Dorsolateral prefrontal cortex (tissue), 120 donors: ENCODE measurements at regions of chr2 and their contacts with region 1.

Region 1: GRCh38 chr2:61764035-61764800 is 89.6 kb downstream of the FAM161A start:
- DNase-seq: peak; percentile 96 to 99 (median 98)
- H3K4me3 ChIP-seq: peak overlapping the region; percentile 55 to 95 (median 77)
- H3K27ac ChIP-seq: peak overlapping the region; percentile 90 to 100 (median 98)
- H3K27me3 ChIP-seq: no peaks in the 10 kb centered on the region
- CTCF ChIP-seq: peak in 18 of 56 donors; percentile 2 to 38 (median 22)

Region 2: GRCh38 chr2:61144697-61145268 is 619.4 kb before region 1 on chr2:
- intact Hi-C with region 1: loop called in 1 of 2 experiments (anchors 10 kb)
- DNase-seq: peak; percentile 79 to 93 (median 88)
- H3K4me3 ChIP-seq: peak overlapping the region; percentile 51 to 96 (median 69)
- H3K27ac ChIP-seq: peak overlapping the region in 58 of 59 donors; percentile 31 to 96 (median 87)
- H3K27me3 ChIP-seq: no peaks in the 10 kb centered on the region
- CTCF ChIP-seq: peak in 29 of 56 donors; percentile 3 to 50 (median 26)

Region 3: DNA sequence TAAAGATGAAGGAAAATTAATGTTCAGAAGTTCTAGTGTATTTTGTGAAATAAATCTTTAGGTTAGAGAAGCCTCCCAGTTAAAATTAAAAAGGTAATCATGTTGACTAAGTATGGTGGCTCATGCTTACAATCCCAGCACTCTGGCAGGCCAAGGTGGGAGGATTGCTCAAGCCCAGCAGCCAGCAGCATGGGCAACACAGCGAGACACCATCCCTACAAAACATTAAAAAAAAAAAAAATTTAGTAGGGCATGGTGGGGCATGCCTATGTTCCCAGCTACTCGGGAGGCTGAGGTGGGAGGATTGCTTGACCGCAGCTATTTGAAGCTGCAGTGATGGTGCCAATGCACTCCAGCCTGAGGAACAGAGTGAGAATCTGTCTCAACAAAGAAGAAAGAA is 244.0 kb before region 1 on chr2:
- intact Hi-C with region 1: no loop called
- DNase-seq: no peak
- H3K4me3 ChIP-seq: no peak overlapping the region
- H3K27ac ChIP-seq: peak overlapping the region in 3 of 59 donors; percentile 0 to 28 (median 16)
- H3K27me3 ChIP-seq: no peaks in the 10 kb centered on the region
- CTCF ChIP-seq: no peak

Region 4: GRCh38 chr2:61670591-61671501 is 93.4 kb before region 1 on chr2:
- intact Hi-C with region 1: loop called in 1 of 2 experiments (anchors 5 kb)
- DNase-seq: peak in 8 of 10 donors; percentile 16 to 78 (median 52)
- H3K4me3 ChIP-seq: peak overlapping the region in 58 of 59 donors; percentile 5 to 65 (median 41)
- H3K27ac ChIP-seq: peak overlapping the region; percentile 76 to 100 (median 98)
- H3K27me3 ChIP-seq: no peaks in the 10 kb centered on the region
- CTCF ChIP-seq: peak in 5 of 56 donors; percentile 16 to 29 (median 20)

Region 5: GRCh38 chr2:61694312-61695274 is 69.6 kb before region 1 on chr2:
- intact Hi-C with region 1: loop called (anchors 2 to 10 kb)
- DNase-seq: peak; percentile 87 to 94 (median 92)
- H3K4me3 ChIP-seq: peak overlapping the region; percentile 57 to 96 (median 86)
- H3K27ac ChIP-seq: peak overlapping the region; percentile 59 to 96 (median 90)
- H3K27me3 ChIP-seq: no peaks in the 10 kb centered on the region
- CTCF ChIP-seq: peak in 52 of 56 donors; percentile 32 to 82 (median 58)

Region 6: DNA sequence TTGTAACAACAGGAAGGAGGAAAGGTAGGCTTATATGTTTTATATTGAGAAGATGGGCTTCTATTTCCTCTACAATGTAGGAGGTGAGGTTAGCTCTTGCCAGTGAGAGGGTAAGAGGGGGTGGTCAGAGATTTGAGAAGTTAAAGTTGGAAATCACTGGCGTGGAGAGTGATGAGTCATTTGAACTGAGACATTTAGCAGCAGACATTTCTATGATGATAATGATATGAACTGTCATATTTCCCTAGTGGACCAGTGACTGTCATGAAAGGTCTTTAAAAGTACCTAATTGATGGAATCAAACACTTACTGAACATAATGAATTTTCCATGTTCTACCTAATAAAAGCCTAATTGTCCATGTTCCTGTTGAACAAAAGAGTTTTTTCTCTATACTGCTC is 36.5 kb before region 1 on chr2:
- intact Hi-C with region 1: no loop called
- DNase-seq: no peak
- H3K4me3 ChIP-seq: no peak overlapping the region
- H3K27ac ChIP-seq: peak overlapping the region in 11 of 59 donors; percentile 1 to 40 (median 16)
- H3K27me3 ChIP-seq: no peaks in the 10 kb centered on the region
- CTCF ChIP-seq: no peak

Region 7: DNA sequence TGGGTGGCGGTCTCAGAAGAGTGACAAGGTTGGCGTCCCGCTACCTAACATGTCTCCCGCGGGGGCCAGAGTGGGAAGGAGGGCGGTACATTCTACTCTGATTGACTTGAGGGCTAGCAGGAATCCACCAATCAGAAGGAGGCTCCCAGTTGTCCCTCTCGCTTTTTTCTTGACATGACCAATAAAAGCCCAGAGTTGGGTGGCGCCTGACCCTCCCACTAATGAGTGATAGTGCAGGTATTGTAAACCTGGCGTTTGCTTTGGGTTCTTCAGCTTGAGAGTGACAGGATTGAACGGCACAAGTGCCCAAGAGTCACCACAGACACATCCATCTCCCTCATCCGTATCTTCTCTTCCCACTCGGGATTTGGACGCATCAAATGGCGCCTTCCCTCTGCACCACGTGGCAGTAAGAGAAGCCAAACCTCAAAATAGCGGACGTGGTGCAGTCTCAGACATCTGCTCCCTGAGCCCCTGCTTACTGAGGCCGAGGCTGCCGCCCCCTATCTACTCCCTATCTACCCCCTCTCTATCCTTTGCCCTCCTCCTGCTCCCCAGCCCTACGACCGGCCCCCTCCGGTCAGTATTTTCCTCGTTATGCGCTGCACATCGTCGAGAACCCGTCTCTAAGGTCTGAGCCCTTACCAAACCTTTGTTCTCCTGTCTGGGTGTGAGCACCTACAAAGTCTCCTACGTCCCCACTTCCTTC is 90.4 kb after region 1 on chr2:
- intact Hi-C with region 1: loop called (anchors 2 kb)
- DNase-seq: peak; percentile 66 to 97 (median 94)
- H3K4me3 ChIP-seq: peak overlapping the region; percentile 39 to 100 (median 88)
- H3K27ac ChIP-seq: peak overlapping the region; percentile 60 to 97 (median 89)
- H3K27me3 ChIP-seq: no peaks in the 10 kb centered on the region
- CTCF ChIP-seq: peak in 9 of 56 donors; percentile 4 to 24 (median 11)